ENCODE measurements at regions of chr11 and their contacts with region 1.

Region 1: DNA sequence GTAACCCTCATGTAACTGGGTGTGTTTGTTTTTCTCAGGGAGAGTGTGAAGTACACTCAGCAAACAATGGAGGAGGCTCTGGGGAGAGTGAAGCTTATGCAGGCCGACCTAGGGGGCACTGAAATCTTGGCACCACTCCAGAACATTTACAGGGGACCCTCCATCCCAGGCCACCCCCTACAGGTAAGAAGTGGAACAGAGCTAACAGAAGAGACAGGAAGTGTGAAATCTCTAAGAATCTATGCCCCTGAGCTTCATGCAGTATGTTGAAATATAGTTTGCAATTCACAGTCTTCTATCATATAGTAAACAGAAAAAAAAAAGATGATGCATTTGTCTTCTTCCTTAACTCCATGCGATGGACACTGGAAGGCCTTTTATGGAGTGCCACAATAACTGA is 8.4 kb downstream of the VWA5A start:
- DNase-seq: no peak
- H3K4me3 ChIP-seq: no peak overlapping the region
- H3K27ac ChIP-seq: no peak overlapping the region
- H3K4me1 ChIP-seq: no peaks in the 10 kb centered on the region
- H3K27me3 ChIP-seq: no peaks in the 10 kb centered on the region
- CTCF ChIP-seq: peak; percentile 20 to 61 (median 60)
- EP300 ChIP-seq: no peak
- POLR2A ChIP-seq: no peak
- RAD21 ChIP-seq: peak; percentile 47 to 55

Region 2: DNA sequence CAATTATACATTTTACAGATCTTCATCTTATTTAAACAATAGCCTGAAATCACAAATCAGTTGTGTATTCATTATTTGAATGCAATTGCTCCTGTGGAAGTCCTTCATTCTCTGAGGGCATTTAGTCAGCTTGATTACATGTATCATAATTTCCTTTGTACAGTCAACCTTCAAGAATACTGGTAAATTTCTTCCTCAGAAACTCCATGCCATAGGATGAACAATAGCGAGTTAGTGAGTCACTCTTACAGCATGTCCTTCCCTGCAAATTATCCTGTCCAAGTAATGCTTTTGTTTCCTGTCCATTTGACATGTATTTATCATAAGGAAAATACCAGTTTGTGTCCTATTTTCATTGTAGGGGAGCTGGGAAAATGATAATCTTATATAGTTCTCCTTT is 149.8 kb before region 1 on chr11:
- CTCF ChIA-PET with region 1: no interaction called
- POLR2A ChIA-PET with region 1: no interaction called
- DNase-seq: no peak
- H3K4me3 ChIP-seq: no peak overlapping the region
- H3K27ac ChIP-seq: no peak overlapping the region
- H3K4me1 ChIP-seq: no peaks in the 10 kb centered on the region
- H3K27me3 ChIP-seq: no peaks in the 10 kb centered on the region
- CTCF ChIP-seq: no peak
- EP300 ChIP-seq: no peak
- POLR2A ChIP-seq: no peak
- RAD21 ChIP-seq: no peak

Region 3: DNA sequence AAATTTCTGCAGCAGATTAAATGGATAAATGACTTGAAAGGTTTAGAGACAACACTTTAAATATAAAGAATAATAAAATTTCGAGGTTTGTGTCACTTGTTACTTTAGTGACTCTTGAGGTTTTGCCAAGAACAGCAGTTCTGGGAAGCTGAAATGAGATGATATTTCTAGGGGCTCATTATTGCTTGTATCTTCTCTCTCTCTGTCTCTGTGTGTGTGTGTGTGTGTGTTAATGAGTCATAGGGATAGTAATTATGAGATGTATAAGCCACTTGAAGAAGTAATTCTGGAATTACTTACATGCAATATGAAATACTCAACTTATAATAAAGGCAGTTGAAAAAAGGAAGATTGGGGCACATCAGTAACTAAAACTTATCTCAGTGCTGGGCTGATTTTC is 72.9 kb before region 1 on chr11:
- CTCF ChIA-PET with region 1: no interaction called
- POLR2A ChIA-PET with region 1: no interaction called
- DNase-seq: no peak
- H3K4me3 ChIP-seq: no peak overlapping the region
- H3K27ac ChIP-seq: no peak overlapping the region
- H3K4me1 ChIP-seq: no peaks in the 10 kb centered on the region
- H3K27me3 ChIP-seq: no peaks in the 10 kb centered on the region
- CTCF ChIP-seq: no peak
- EP300 ChIP-seq: no peak
- POLR2A ChIP-seq: no peak
- RAD21 ChIP-seq: no peak

Region 4: DNA sequence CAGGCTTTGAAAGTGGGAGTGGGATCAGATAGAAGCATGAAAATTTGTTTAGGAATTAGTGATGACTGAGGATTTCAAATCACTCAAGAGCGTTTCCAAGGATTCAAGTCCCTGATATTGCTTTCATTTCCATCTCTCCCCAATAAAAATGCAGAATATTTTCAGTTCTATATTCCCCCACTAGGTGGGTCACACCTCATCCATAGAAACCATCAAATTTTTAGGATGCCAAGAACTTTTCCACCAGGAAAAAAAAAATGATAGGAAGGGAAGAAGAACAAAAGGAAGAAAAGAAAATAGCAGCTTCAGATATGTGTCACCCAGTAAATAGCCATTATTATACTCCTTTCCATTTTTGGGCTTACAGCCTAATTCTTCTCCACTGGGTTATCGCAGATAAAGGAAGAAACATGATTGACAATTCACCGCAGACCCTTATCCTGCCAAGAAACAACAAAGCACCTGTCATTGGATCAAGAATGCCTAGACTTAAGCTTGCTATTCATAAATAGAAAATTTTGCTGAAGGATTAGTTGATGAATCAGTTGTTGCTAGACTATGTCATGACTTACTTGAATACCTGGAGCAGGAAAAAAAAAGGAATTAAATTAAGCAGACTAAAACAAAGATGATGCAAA is 29.3 kb after region 1 on chr11:
- CTCF ChIA-PET with region 1: interaction called, 14 read pairs
- POLR2A ChIA-PET with region 1: no interaction called
- DNase-seq: no peak
- H3K4me3 ChIP-seq: no peak overlapping the region
- H3K27ac ChIP-seq: no peak overlapping the region
- H3K4me1 ChIP-seq: no peaks in the 10 kb centered on the region
- H3K27me3 ChIP-seq: no peaks in the 10 kb centered on the region
- CTCF ChIP-seq: no peak; a peak in 1 of 4 replicates
- EP300 ChIP-seq: no peak
- POLR2A ChIP-seq: no peak
- RAD21 ChIP-seq: no peak